Activated CD4-positive, alpha-beta T cell treated with anti-CD3 and anti-CD28 coated beads, Interleukin-2, amount 10 ng/mL, durations not matched to agents 24 days and 14 days (primary cell): ENCODE measurements at regions of chr17 and their contacts with region 1.

Region 1: GRCh38 chr17:68356520-68356919 is 65.2 kb downstream of the ARSG start:
- DNase-seq: peak; percentile 93
- H3K4me3 Mint-ChIP-seq: peak overlapping the region; percentile 59
- H3K27ac Mint-ChIP-seq: peak overlapping the region; percentile 77
- H3K4me1 Mint-ChIP-seq: peaks cover 56% of the 10 kb centered on the region
- H3K27me3 Mint-ChIP-seq: no peaks in the 10 kb centered on the region

Region 2: DNA sequence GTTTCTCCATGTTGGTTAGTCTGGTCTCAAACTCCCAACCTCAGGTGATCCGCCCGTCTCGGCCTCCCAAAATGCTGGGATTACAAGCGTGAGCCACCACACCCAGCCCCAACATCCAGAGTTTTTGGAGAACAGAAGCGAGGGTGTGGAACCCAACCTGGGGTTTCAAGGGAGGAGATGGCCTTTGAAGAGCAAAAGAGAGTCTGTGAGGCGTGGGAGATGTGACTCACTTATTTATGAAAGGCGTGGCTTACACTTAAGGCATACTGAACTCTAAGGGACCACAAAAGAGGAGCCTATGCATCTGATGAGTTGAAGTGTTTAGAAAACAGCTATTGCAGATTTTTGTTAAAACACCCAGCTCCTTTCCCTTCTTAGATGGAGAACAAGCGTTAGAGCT is 46.4 kb before region 1 on chr17:
- intact Hi-C with region 1: loop called (anchors 2 kb)
- DNase-seq: peak; percentile 81
- H3K4me3 Mint-ChIP-seq: peak overlapping the region; percentile 40
- H3K27ac Mint-ChIP-seq: no peak overlapping the region
- H3K4me1 Mint-ChIP-seq: peaks cover 40% of the 10 kb centered on the region
- H3K27me3 Mint-ChIP-seq: peaks cover 1% of the 10 kb centered on the region

Region 3: DNA sequence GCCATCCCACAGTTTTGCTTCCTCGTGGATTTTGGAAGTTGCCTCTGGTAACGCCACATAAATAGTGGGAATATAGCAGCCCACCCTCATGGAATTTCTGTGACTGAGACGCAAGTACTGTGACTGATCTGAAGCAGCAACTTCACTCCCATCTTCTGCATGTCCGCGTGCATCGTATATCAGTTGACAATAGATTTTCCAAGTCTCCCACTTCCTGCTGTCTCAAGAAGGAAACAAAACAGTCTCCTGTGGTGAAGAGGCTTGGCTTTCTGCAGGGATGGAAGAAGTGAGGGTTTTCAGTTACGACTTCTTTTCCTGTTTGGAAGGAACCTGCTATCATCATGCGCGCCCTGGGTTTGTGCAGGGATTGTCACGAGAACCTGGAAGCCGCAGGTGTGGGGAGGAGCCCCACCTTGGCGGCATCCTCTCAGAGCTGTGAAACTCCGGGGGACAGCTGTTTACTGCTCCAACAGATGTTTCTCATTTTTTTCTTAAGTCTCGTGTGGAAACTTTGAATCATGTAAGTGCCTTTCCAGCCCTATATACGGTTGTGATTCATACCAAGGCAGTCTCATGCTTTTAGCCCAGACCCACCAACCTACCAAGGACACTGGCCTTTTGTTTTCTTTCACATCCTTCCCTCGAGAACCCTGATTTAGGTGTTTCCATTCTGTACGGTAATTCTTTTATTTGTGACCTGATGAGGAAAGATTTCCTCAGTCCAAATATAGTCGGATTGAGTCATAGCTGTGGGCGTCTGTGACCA is 43.3 kb after region 1 on chr17:
- intact Hi-C with region 1: loop called (anchors 2 kb)
- DNase-seq: peak; percentile 80
- H3K4me3 Mint-ChIP-seq: peak overlapping the region; percentile 62
- H3K27ac Mint-ChIP-seq: peak overlapping the region; percentile 88
- H3K4me1 Mint-ChIP-seq: peaks cover 33% of the 10 kb centered on the region
- H3K27me3 Mint-ChIP-seq: no peaks in the 10 kb centered on the region

Region 4: DNA sequence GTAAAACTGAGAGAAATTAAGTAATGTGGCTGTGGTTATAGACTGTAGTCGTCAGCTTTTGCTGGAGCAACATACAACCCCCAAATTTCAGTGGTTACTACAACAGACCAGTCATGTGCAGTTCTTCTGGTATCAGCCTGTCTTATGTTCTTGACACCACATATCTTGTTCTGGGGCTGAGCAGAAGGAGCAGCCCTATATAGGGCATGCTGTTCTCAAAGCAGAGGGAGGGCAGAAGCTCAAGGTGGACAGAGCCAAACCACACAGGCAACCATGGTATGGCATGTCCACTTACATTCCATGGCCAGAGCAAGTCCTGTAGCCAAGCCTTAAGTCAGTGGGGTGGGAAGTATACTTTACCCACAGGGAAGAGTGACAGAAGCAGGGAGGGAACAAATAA is 163.4 kb after region 1 on chr17:
- intact Hi-C with region 1: no loop called
- DNase-seq: no peak
- H3K4me3 Mint-ChIP-seq: no peak overlapping the region
- H3K27ac Mint-ChIP-seq: no peak overlapping the region
- H3K4me1 Mint-ChIP-seq: peaks cover 31% of the 10 kb centered on the region
- H3K27me3 Mint-ChIP-seq: no peaks in the 10 kb centered on the region